PC-9 (cell line): ENCODE measurements at regions of chr17 and their contacts with region 1.

Region 1: DNA sequence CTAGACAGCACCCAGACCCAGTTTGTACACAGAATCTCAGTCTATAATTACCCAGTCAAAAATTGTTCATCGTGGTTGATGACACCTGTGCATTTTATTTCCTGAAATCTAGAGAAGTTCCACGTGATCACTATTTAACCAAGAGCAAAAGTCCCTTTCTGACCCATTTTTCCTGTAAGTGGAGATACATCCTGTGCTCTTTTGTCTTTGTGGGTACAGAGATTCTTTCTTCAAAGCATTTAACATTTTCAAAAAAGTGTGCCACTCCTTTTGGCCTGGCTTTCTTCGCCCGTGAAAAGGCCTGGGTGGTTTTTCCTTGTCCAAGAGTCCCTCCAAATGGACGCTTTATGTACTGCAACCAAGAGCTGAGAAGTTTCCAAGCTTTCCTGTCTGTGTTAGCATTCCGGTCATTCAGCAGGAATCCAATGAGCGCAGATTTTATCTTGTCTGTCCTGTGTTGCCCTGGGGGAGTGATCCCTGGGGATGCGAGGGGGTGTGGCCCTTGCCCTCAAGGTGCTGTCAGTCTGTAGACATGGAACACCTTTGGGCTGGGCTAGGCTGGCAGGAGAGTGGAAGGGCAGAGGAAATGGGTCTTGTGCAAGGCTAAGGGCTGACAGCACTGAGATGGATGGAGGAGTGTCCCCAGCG is 161.1 kb upstream of the CACNG5 start:
- DNase-seq: peak; percentile 82 to 87
- H3K4me3 ChIP-seq: no peak overlapping the region
- H3K27ac ChIP-seq: peak overlapping the region; percentile 48
- H3K4me1 ChIP-seq: peaks cover 44% of the 10 kb centered on the region
- H3K27me3 ChIP-seq: no peaks in the 10 kb centered on the region
- CTCF ChIP-seq: peak; percentile 87

Region 2: DNA sequence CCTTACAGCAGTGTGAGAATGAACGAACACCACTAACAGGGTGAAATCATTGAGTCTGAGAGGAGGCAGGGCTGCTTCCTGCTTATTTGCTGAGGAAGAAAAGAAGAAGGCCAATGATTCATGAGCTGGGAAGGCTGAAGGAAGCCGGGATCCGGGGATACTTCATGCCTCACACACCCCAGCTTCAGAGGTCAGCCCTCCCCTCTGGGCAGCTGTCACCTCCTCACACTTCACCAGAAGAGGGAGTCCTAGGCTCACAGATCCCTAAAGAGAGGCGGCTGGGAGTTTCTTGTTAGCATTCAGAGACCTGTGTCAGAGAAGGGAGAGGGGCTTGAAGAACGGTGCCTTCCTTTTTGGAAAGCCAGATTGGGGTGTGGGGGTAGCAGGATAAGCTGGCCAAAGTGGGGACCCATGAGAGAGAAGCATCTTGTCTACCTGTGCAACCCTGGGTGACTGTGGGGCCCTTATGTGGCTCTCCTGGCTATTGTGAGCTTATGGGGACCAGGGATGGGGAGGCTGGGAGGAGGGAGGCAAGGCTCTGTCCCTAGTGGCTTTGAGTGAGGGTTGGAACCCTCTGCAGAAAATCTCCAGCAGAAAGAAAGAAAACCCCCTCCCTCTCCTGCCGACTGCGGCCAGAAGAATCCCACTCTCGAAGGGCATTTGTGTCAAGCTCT is 1442.0 kb before region 1 on chr17:
- CTCF ChIA-PET with region 1: interaction called, 3 read pairs
- POLR2A ChIA-PET with region 1: no interaction called
- intact Hi-C with region 1: loop called (anchors 1 kb)
- DNase-seq: peak; percentile 63 to 78
- H3K4me3 ChIP-seq: no peak overlapping the region
- H3K27ac ChIP-seq: no peak overlapping the region
- H3K4me1 ChIP-seq: peaks cover 16% of the 10 kb centered on the region
- H3K27me3 ChIP-seq: no peaks in the 10 kb centered on the region
- CTCF ChIP-seq: peak; percentile 83

Region 3: GRCh38 chr17:65294179-65294720 is 1379.5 kb before region 1 on chr17:
- CTCF ChIA-PET with region 1: no interaction called
- POLR2A ChIA-PET with region 1: no interaction called
- intact Hi-C with region 1: loop called (anchors 2 kb)
- DNase-seq: peak; percentile 32 to 40
- H3K4me3 ChIP-seq: no peak overlapping the region
- H3K27ac ChIP-seq: no peak overlapping the region
- H3K4me1 ChIP-seq: no peaks in the 10 kb centered on the region
- H3K27me3 ChIP-seq: no peaks in the 10 kb centered on the region
- CTCF ChIP-seq: peak; percentile 77

Region 4: GRCh38 chr17:66200685-66201092 is 473.1 kb before region 1 on chr17:
- CTCF ChIA-PET with region 1: no interaction called
- POLR2A ChIA-PET with region 1: no interaction called
- intact Hi-C with region 1: loop called (anchors 1 kb)
- DNase-seq: peak; percentile 21 to 42
- H3K4me3 ChIP-seq: no peak overlapping the region
- H3K27ac ChIP-seq: no peak overlapping the region
- H3K4me1 ChIP-seq: no peaks in the 10 kb centered on the region
- H3K27me3 ChIP-seq: no peaks in the 10 kb centered on the region
- CTCF ChIP-seq: peak; percentile 72

Region 5: GRCh38 chr17:66255112-66255511 is 418.7 kb before region 1 on chr17:
- CTCF ChIA-PET with region 1: no interaction called
- POLR2A ChIA-PET with region 1: no interaction called
- intact Hi-C with region 1: loop called (anchors 1 kb)
- DNase-seq: peak; percentile 34 to 79
- H3K4me3 ChIP-seq: no peak overlapping the region
- H3K27ac ChIP-seq: no peak overlapping the region
- H3K4me1 ChIP-seq: peaks cover 10% of the 10 kb centered on the region
- H3K27me3 ChIP-seq: no peaks in the 10 kb centered on the region
- CTCF ChIP-seq: peak; percentile 86

Region 6: GRCh38 chr17:66549731-66550207 is 124.0 kb before region 1 on chr17:
- CTCF ChIA-PET with region 1: no interaction called
- POLR2A ChIA-PET with region 1: no interaction called
- intact Hi-C with region 1: no loop called
- DNase-seq: peak; percentile 16 to 63
- H3K4me3 ChIP-seq: no peak overlapping the region
- H3K27ac ChIP-seq: peak overlapping the region; percentile 12; the same call in 1 of the 2 replicates
- H3K4me1 ChIP-seq: peaks cover 55% of the 10 kb centered on the region
- H3K27me3 ChIP-seq: no peaks in the 10 kb centered on the region
- CTCF ChIP-seq: no peak

Region 7: GRCh38 chr17:66636111-66636510 is 37.7 kb before region 1 on chr17:
- CTCF ChIA-PET with region 1: no interaction called
- POLR2A ChIA-PET with region 1: no interaction called
- intact Hi-C with region 1: loop called (anchors 2 kb)
- DNase-seq: peak; percentile 39 to 87
- H3K4me3 ChIP-seq: no peak overlapping the region
- H3K27ac ChIP-seq: peak overlapping the region; percentile 61
- H3K4me1 ChIP-seq: peaks cover 64% of the 10 kb centered on the region
- H3K27me3 ChIP-seq: no peaks in the 10 kb centered on the region
- CTCF ChIP-seq: no peak

Region 8: GRCh38 chr17:66755101-66755904 is 81.5 kb after region 1 on chr17:
- CTCF ChIA-PET with region 1: no interaction called
- POLR2A ChIA-PET with region 1: no interaction called
- intact Hi-C with region 1: no loop called
- DNase-seq: no peak
- H3K4me3 ChIP-seq: no peak overlapping the region
- H3K27ac ChIP-seq: no peak overlapping the region
- H3K4me1 ChIP-seq: no peaks in the 10 kb centered on the region
- H3K27me3 ChIP-seq: no peaks in the 10 kb centered on the region
- CTCF ChIP-seq: no peak

Region 9: DNA sequence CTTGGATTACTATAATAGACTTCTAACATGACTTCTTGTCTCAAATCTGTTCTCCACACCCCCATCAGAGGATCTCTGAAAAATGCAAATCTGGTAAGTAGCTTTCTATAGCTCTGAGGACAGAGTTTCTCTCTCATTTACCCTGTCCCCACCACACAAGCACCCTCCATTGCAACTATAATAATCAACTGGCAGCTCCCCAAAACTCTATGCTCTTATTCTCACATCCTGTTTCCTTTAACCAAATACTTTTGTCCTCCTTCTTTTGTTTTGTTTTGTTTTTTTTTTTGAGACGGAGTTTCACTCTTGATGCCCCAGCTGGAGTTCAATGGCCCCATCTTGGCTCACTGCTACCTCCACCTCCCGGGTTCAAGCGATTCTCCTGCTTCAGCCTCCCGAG is 497.8 kb after region 1 on chr17:
- CTCF ChIA-PET with region 1: no interaction called
- POLR2A ChIA-PET with region 1: no interaction called
- intact Hi-C with region 1: no loop called
- DNase-seq: no peak
- H3K4me3 ChIP-seq: no peak overlapping the region
- H3K27ac ChIP-seq: no peak overlapping the region
- H3K4me1 ChIP-seq: no peaks in the 10 kb centered on the region
- H3K27me3 ChIP-seq: no peaks in the 10 kb centered on the region
- CTCF ChIP-seq: no peak